ENCODE measurements at regions of chr11 and their contacts with region 1.

Region 1: DNA sequence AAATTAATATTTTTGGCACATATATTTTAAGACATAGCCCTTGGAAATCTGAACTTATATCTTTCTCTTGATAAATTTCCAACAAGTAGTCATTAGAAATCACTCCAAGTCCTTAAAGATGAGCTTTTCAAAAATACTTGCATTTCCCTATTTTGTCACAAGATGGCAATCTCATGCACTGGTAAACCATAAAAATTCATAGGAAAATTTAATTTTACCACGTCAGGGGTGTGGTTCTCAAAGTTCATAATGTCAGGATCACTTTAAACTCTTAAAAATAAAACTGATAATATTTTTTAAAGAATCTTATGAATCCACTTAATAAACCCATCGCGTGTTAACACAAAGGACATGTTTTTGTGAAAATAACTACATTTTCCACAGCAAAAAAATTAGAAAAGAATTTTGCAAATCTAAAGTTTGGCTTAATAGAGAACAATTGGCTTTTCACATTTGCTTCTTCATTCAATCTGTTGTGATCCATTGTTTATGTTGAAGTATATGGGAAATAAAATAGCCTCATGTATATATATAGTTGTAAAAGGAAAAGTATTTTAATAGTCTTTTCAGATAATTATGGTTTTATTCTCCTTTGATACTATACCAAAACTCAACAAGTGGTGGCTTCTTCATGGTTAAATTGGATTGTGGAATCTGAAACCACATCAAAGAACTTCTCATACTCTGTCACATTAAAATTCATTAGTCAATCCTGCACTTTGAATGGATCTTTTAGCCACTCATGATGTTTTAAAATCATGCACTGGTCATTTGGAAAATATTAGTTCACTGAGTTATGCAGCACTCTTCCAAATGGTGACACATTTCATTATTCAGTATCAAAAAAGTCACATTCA is 169.1 kb downstream of the CADM1 start:
- DNase-seq: no peak
- H3K4me3 ChIP-seq: no peak overlapping the region
- H3K27ac ChIP-seq: no peak overlapping the region
- H3K4me1 ChIP-seq: peaks cover 0 to 3% (median 0%) of the 10 kb centered on the region in 6 donors
- H3K27me3 ChIP-seq: no peaks in the 10 kb centered on the region
- CTCF ChIP-seq: peak in 10 of 11 experiments; percentile 21 to 72 (median 62)
- POLR2A ChIP-seq: no peak

Region 2: GRCh38 chr11:115504276-115505158 is 169.4 kb after region 1 on chr11 and contains the start of gene CADM1:
- intact Hi-C with region 1: loop called (anchors 10 kb)
- DNase-seq: peak; percentile 92
- H3K4me3 ChIP-seq: peak within 1 kb of the TSS; percentile 47 to 70 (median 52)
- H3K27ac ChIP-seq: peak within 1 kb of the TSS; percentile 13 to 77 (median 58)
- H3K4me1 ChIP-seq: peaks cover 0 to 45% (median 22%) of the 10 kb centered on the region in 6 donors
- H3K27me3 ChIP-seq: peaks cover 0 to 89% (median 48%) of the 10 kb centered on the region in 7 donors
- CTCF ChIP-seq: peak; percentile 7 to 84 (median 76)
- POLR2A ChIP-seq: peak in 1 of 3 donors; percentile 35
- total RNA-seq, gene CADM1: 9.5 to 18.8 (median 12.0) TPM

Region 3: GRCh38 chr11:116691771-116692177 is 1356.6 kb after region 1 on chr11:
- intact Hi-C with region 1: loop called (anchors 10 kb)
- DNase-seq: peak; percentile 81
- H3K4me3 ChIP-seq: no peak overlapping the region
- H3K27ac ChIP-seq: no peak overlapping the region
- H3K4me1 ChIP-seq: peaks cover 0 to 6% (median 0%) of the 10 kb centered on the region in 6 donors
- H3K27me3 ChIP-seq: peaks cover 0 to 42% (median 0%) of the 10 kb centered on the region in 7 donors
- CTCF ChIP-seq: peak; percentile 61 to 85 (median 81)
- POLR2A ChIP-seq: no peak